Head of caudate nucleus (tissue), 42 donors: ENCODE measurements at regions of chr18 and their contacts with region 1.

Region 1: DNA sequence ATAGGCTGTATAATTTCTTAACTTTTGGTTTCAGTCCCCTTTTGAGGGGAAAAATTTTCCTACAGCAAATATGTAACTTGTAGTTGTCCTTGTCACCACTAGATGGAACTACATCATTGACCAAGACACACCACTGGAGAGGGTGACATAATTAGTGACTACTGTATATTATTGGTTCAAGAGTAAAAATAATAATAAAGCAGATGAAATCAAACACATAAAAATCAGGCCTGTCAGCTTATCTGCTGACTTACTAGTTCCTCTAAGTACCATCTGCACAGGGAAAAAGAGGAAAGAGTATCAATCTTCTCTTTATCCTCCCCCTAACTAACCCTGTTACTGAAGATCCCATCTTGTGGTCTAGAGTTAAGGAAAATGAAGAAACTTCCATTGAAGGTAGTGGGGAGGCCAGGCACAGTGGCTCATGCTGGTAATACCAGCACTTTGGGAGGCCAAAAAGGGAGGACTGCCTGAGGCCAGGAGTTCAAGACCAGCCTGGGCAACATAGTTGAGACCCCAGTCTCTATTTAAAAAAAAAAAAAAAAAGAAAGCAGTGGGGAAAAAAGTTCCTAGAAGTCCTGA is 29.6 kb upstream of the ENOSF1 start:
- DNase-seq: peak in 1 of 42 donors; percentile 32

Region 2: GRCh38 chr18:346610-347009 is 395.4 kb before region 1 on chr18:
- intact Hi-C with region 1: no loop called
- DNase-seq: no peak

Region 3: GRCh38 chr18:832085-832681 is 90.2 kb after region 1 on chr18:
- intact Hi-C with region 1: loop called (anchors 2 kb)
- DNase-seq: peak in 1 of 42 donors; percentile 4

Region 4: GRCh38 chr18:1094409-1094808 is 352.4 kb after region 1 on chr18:
- intact Hi-C with region 1: no loop called
- DNase-seq: peak in 7 of 42 donors; percentile 5 to 31 (median 12)